ENCODE measurements at regions of chr6 and their contacts with region 1.

Region 1: GRCh38 chr6:26122793-26123674 is 35.8 kb downstream of the HFE start:
- DNase-seq: peak; percentile 95
- ATAC-seq: peak; percentile 57
- H3K4me3 Mint-ChIP-seq: peak overlapping the region; percentile 82
- H3K27ac Mint-ChIP-seq: peak overlapping the region; percentile 100
- H3K4me1 Mint-ChIP-seq: peaks cover 34% of the 10 kb centered on the region
- H3K27me3 Mint-ChIP-seq: peaks cover 3% of the 10 kb centered on the region

Region 2: GRCh38 chr6:26031595-26032339 is 91.3 kb before region 1 on chr6:
- CTCF ChIA-PET with region 1: interaction called, 5 read pairs
- POLR2A ChIA-PET with region 1: interaction called, 67 read pairs
- intact Hi-C with region 1: loop called (anchors 1 kb)
- DNase-seq: peak; percentile 92
- ATAC-seq: peak; percentile 69
- H3K4me3 Mint-ChIP-seq: peak overlapping the region; percentile 81
- H3K27ac Mint-ChIP-seq: peak overlapping the region; percentile 98
- H3K4me1 Mint-ChIP-seq: peaks cover 50% of the 10 kb centered on the region
- H3K27me3 Mint-ChIP-seq: no peaks in the 10 kb centered on the region

Region 3: DNA sequence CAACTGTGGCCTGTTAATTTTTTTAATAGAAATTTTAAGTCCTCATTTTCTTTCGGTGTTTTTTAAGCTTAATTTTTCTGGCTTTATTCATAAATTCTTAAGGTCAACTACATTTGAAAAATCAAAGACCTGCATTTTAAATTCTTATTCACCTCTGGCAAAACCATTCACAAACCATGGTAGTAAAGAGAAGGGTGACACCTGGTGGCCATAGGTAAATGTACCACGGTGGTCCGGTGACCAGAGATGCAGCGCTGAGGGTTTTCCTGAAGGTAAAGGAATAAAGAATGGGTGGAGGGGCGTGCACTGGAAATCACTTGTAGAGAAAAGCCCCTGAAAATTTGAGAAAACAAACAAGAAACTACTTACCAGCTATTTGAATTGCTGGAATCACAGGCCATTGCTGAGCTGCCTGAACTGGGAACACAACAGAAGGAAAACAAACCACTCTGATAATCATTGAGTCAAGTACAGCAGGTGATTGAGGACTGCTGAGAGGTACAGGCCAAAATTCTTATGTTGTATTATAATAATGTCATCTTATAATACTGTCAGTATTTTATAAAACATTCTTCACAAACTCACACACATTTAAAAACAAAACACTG is 25.7 kb before region 1 on chr6:
- CTCF ChIA-PET with region 1: interaction called, 10 read pairs
- POLR2A ChIA-PET with region 1: interaction called, 3 read pairs
- intact Hi-C with region 1: no loop called
- DNase-seq: peak; percentile 74
- ATAC-seq: peak; percentile 88
- H3K4me3 Mint-ChIP-seq: no peak overlapping the region
- H3K27ac Mint-ChIP-seq: no peak overlapping the region
- H3K4me1 Mint-ChIP-seq: peaks cover 2% of the 10 kb centered on the region
- H3K27me3 Mint-ChIP-seq: no peaks in the 10 kb centered on the region

Region 4: GRCh38 chr6:26175428-26176181 is 52.6 kb after region 1 on chr6:
- CTCF ChIA-PET with region 1: interaction called, 6 read pairs
- POLR2A ChIA-PET with region 1: interaction called, 21 read pairs
- intact Hi-C with region 1: loop called in 1 of 2 experiments (anchors 1 kb)
- DNase-seq: peak; percentile 69
- ATAC-seq: peak; percentile 14
- H3K4me3 Mint-ChIP-seq: peak overlapping the region; percentile 30
- H3K27ac Mint-ChIP-seq: peak overlapping the region; percentile 80
- H3K4me1 Mint-ChIP-seq: peaks cover 33% of the 10 kb centered on the region
- H3K27me3 Mint-ChIP-seq: no peaks in the 10 kb centered on the region

Region 5: GRCh38 chr6:26234421-26235296 is 111.6 kb after region 1 on chr6:
- CTCF ChIA-PET with region 1: no interaction called
- POLR2A ChIA-PET with region 1: interaction called, 33 read pairs
- intact Hi-C with region 1: no loop called
- DNase-seq: peak; percentile 81
- ATAC-seq: peak; percentile 73
- H3K4me3 Mint-ChIP-seq: peak overlapping the region; percentile 77
- H3K27ac Mint-ChIP-seq: peak overlapping the region; percentile 100
- H3K4me1 Mint-ChIP-seq: peaks cover 31% of the 10 kb centered on the region
- H3K27me3 Mint-ChIP-seq: peaks cover 2% of the 10 kb centered on the region

Region 6: GRCh38 chr6:26439657-26440056 is 316.6 kb after region 1 on chr6:
- CTCF ChIA-PET with region 1: no interaction called
- POLR2A ChIA-PET with region 1: interaction called, 14 read pairs
- intact Hi-C with region 1: no loop called
- DNase-seq: no peak
- ATAC-seq: no peak
- H3K4me3 Mint-ChIP-seq: peak overlapping the region; percentile 96
- H3K27ac Mint-ChIP-seq: peak overlapping the region; percentile 98
- H3K4me1 Mint-ChIP-seq: peaks cover 40% of the 10 kb centered on the region
- H3K27me3 Mint-ChIP-seq: no peaks in the 10 kb centered on the region

Region 7: GRCh38 chr6:26662642-26663041 is 539.6 kb after region 1 on chr6:
- CTCF ChIA-PET with region 1: no interaction called
- POLR2A ChIA-PET with region 1: no interaction called
- intact Hi-C with region 1: no loop called
- DNase-seq: no peak
- ATAC-seq: no peak
- H3K4me3 Mint-ChIP-seq: no peak overlapping the region
- H3K27ac Mint-ChIP-seq: no peak overlapping the region
- H3K4me1 Mint-ChIP-seq: peaks cover 17% of the 10 kb centered on the region
- H3K27me3 Mint-ChIP-seq: peaks cover 38% of the 10 kb centered on the region

Region 8: DNA sequence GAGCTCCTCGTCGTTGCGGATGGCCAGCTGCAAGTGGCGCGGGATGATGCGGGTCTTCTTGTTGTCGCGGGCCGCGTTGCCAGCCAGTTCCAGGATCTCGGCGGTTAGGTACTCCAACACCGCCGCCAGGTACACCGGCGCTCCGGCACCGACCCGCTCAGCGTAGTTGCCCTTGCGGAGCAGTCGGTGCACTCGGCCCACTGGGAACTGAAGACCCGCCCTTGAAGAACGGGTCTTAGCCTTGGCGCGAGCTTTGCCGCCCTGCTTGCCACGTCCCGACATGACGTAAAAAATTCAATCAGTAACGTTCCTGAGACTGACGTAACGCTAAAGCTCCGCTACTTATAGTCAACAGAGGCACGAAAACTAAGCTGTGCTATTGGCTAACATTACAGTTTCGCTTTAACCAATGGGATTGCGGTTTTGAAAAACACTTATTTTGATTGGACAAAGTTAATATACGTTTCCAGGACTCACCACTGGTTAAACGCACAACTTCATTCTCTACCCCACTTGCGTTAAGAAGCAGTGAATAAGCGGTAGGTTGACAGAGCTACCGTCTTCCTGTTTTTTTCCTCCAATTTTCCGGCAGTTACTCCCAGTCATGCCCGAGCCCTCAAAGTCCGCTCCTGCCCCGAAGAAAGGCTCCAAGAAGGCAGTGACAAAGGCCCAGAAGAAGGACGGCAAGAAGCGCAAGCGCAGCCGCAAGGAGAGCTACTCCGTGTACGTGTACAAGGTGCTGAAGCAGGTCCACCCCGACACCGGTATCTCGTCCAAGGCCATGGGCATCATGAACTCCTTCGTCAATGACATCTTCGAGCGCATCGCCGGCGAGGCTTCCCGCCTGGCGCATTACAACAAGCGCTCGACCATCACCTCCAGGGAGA is 1715.3 kb after region 1 on chr6:
- CTCF ChIA-PET with region 1: no interaction called
- POLR2A ChIA-PET with region 1: interaction called, 11 read pairs
- intact Hi-C with region 1: no loop called
- DNase-seq: peak; percentile 89
- ATAC-seq: peak; percentile 74
- H3K4me3 Mint-ChIP-seq: no peak overlapping the region
- H3K27ac Mint-ChIP-seq: no peak overlapping the region
- H3K4me1 Mint-ChIP-seq: peaks cover 23% of the 10 kb centered on the region
- H3K27me3 Mint-ChIP-seq: peaks cover 9% of the 10 kb centered on the region